Kidney (tissue), 22 donors: ENCODE measurements at regions of chr10 and their contacts with region 1.

Region 1: DNA sequence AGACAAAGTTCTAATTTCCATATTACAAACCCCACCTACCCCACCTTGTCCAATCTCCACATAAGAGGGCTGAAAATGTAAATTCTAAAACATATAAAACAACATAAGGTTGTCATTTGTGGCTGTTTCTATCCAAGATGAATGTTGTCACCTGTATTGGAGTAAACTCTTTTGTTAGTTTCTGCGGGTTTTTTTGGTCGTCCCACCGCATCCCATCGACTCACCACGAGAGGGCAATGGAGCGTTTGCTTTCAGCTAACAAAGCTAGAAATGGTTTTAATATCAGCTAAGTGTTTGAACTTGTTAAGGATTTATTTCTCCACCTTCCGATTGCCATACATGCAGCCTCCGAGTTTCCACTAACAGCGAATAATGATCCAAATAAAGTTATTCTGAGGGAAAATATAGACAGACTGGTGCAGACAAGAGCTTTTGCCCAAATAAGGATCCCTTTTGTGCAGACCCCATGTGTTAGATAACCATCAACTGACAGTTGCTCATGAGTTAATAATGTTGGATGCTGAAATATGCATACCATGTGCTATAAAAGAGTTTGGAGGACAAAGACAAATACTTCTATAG is 137.2 kb downstream of the ARID5B start:
- DNase-seq: peak; percentile 70 to 89 (median 80)
- H3K4me3 ChIP-seq: peak overlapping the region in 2 of 3 donors; percentile 1 to 35
- H3K27ac ChIP-seq: peak overlapping the region; percentile 10 to 65
- H3K4me1 ChIP-seq: peaks cover 12 to 46% (median 24%) of the 10 kb centered on the region in 3 donors
- H3K27me3 ChIP-seq: no peaks in the 10 kb centered on the region
- CTCF ChIP-seq: peak; percentile 86

Region 2: GRCh38 chr10:61804414-61804813 is 234.3 kb before region 1 on chr10:
- intact Hi-C with region 1: no loop called
- DNase-seq: no peak
- H3K4me3 ChIP-seq: no peak overlapping the region
- H3K27ac ChIP-seq: no peak overlapping the region
- H3K4me1 ChIP-seq: no peaks in the 10 kb centered on the region
- H3K27me3 ChIP-seq: no peaks in the 10 kb centered on the region
- CTCF ChIP-seq: no peak

Region 3: DNA sequence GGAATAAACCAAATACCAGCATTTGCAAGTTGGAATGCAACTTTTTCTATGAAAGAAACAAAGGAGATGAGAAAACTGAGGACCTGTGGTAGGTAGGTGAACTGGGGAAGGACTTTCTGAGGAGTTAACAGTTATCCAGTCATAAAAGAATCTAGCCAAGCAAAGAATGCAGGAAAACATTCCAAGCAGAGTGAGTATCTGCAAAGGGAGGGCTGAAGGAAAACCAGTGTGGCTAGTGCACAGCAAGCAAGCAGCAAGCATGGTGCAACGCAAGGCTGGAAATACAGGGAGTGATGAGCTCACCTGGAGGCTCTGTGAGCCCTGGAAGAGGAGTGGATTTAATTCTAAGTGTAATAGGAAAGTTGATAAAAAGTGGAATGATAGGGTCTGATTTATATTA is 185.9 kb after region 1 on chr10:
- intact Hi-C with region 1: loop called (anchors 10 kb)
- DNase-seq: no peak
- H3K4me3 ChIP-seq: no peak overlapping the region
- H3K27ac ChIP-seq: no peak overlapping the region
- H3K4me1 ChIP-seq: no peaks in the 10 kb centered on the region
- H3K27me3 ChIP-seq: no peaks in the 10 kb centered on the region
- CTCF ChIP-seq: no peak

Region 4: GRCh38 chr10:62681211-62681940 is 642.7 kb after region 1 on chr10:
- intact Hi-C with region 1: no loop called
- DNase-seq: peak in 1 of 5 donors; percentile 3
- H3K4me3 ChIP-seq: no peak overlapping the region
- H3K27ac ChIP-seq: no peak overlapping the region
- H3K4me1 ChIP-seq: no peaks in the 10 kb centered on the region
- H3K27me3 ChIP-seq: no peaks in the 10 kb centered on the region
- CTCF ChIP-seq: no peak

Region 5: GRCh38 chr10:62760401-62760800 is 721.7 kb after region 1 on chr10:
- intact Hi-C with region 1: no loop called
- DNase-seq: peak in 1 of 5 donors; percentile 31
- H3K4me3 ChIP-seq: no peak overlapping the region
- H3K27ac ChIP-seq: peak overlapping the region in 1 of 2 donors; percentile 51
- H3K4me1 ChIP-seq: no peaks in the 10 kb centered on the region
- H3K27me3 ChIP-seq: no peaks in the 10 kb centered on the region
- CTCF ChIP-seq: no peak